Activated CD4-positive, alpha-beta T cell treated with anti-CD3 and anti-CD28 coated beads, Interleukin-2, amount 10 ng/mL, durations not matched to agents 24 days and 14 days (primary cell): ENCODE measurements at regions of chr2 and their contacts with region 1.

Region 1: GRCh38 chr2:169928463-169928864 is 101.2 kb downstream of the UBR3 start:
- DNase-seq: no peak
- H3K4me3 Mint-ChIP-seq: no peak overlapping the region
- H3K27ac Mint-ChIP-seq: no peak overlapping the region
- H3K4me1 Mint-ChIP-seq: no peaks in the 10 kb centered on the region
- H3K27me3 Mint-ChIP-seq: no peaks in the 10 kb centered on the region

Region 2: GRCh38 chr2:169452080-169452479 is 476.4 kb before region 1 on chr2:
- intact Hi-C with region 1: loop called (anchors 5 kb)
- DNase-seq: no peak
- H3K4me3 Mint-ChIP-seq: no peak overlapping the region
- H3K27ac Mint-ChIP-seq: no peak overlapping the region
- H3K4me1 Mint-ChIP-seq: no peaks in the 10 kb centered on the region
- H3K27me3 Mint-ChIP-seq: peaks cover 16% of the 10 kb centered on the region

Region 3: DNA sequence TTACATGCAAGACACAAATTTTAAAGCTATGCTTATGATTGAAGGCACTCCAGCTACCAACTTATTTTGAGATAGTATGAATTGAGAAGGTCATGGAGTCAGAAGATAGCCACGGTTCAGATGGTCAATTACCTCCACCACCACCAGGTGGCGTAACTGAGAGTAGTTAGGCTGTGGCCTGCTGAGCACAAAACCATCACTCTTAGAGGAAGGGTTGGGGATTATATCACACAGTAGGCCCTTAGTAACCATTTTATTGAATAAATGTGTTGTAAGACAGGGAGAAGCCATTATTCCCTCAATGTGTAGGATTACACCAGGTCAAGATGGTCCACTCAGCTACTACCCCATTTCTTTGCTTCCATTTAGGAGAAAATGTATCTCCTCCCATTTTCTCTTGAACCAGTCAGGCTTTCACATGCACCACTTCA is 400.2 kb before region 1 on chr2:
- intact Hi-C with region 1: loop called (anchors 5 kb)
- DNase-seq: peak; percentile 91
- H3K4me3 Mint-ChIP-seq: no peak overlapping the region
- H3K27ac Mint-ChIP-seq: no peak overlapping the region
- H3K4me1 Mint-ChIP-seq: no peaks in the 10 kb centered on the region
- H3K27me3 Mint-ChIP-seq: no peaks in the 10 kb centered on the region